ENCODE measurements at regions of chr12 and their contacts with region 1.

Region 1: GRCh38 chr12:92049403-92049802 is 96.2 kb downstream of the BTG1 start:
- DNase-seq: peak; percentile 32
- CTCF ChIP-seq: no peak

Region 2: GRCh38 chr12:92065018-92065499 is 15.7 kb after region 1 on chr12:
- CTCF ChIA-PET with region 1: interaction called, 18 read pairs
- POLR2A ChIA-PET with region 1: no interaction called
- DNase-seq: no peak
- CTCF ChIP-seq: no peak

Measured in GM10248 (cell line).